Activated naive CD4-positive, alpha-beta T cell treated with anti-CD3 and anti-CD28 coated beads, Interleukin-2, amount 10 ng/mL, durations not matched to agents 7 days and 5 days (primary cell): ENCODE measurements at regions of chr10 and their contacts with region 1.

Region 1: GRCh38 chr10:100433253-100434240 is 29.3 kb upstream of the WNT8B start:
- DNase-seq: peak; percentile 98
- H3K4me3 Mint-ChIP-seq: no peak overlapping the region
- H3K27ac Mint-ChIP-seq: no peak overlapping the region
- H3K4me1 Mint-ChIP-seq: peaks cover 9% of the 10 kb centered on the region
- H3K27me3 Mint-ChIP-seq: no peaks in the 10 kb centered on the region

Region 2: DNA sequence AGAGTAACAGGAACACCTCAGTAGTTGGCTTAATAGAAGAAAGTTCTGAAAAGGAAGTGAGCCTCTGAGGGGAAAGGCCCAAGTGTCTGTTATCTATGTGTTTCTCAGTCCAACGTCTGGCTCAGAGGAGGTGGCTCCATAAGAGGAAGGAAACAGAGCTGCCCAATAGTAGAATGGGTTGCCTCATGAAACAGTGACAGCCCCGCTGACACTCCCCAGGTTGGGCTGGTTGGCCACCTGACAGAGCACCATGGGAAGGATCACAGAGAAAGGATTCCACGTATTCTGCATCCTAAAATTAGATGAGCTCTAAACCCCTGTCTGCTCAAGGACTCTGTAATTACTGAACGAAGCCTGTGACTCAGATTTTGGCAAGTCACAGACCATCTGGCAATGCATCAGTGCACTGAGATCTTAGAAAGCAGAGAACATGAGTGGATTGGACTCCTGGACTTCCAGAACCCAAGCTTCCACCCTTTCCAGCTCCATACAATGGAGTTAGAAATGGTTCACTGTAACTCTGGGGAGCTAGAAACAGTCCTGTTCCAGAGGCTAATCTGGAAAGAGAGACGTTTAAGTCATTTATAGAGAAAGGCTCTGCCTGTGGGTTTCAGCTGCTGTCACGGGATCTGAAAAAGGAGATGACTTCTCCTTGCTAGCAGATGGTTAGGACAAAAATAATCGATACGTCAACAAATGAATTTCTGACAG is 106.4 kb before region 1 on chr10:
- CTCF ChIA-PET with region 1: interaction called, 13 read pairs
- DNase-seq: peak; percentile 57
- H3K4me3 Mint-ChIP-seq: no peak overlapping the region
- H3K27ac Mint-ChIP-seq: peak overlapping the region; percentile 7
- H3K4me1 Mint-ChIP-seq: peaks cover 19% of the 10 kb centered on the region
- H3K27me3 Mint-ChIP-seq: peaks cover 30% of the 10 kb centered on the region

Region 3: DNA sequence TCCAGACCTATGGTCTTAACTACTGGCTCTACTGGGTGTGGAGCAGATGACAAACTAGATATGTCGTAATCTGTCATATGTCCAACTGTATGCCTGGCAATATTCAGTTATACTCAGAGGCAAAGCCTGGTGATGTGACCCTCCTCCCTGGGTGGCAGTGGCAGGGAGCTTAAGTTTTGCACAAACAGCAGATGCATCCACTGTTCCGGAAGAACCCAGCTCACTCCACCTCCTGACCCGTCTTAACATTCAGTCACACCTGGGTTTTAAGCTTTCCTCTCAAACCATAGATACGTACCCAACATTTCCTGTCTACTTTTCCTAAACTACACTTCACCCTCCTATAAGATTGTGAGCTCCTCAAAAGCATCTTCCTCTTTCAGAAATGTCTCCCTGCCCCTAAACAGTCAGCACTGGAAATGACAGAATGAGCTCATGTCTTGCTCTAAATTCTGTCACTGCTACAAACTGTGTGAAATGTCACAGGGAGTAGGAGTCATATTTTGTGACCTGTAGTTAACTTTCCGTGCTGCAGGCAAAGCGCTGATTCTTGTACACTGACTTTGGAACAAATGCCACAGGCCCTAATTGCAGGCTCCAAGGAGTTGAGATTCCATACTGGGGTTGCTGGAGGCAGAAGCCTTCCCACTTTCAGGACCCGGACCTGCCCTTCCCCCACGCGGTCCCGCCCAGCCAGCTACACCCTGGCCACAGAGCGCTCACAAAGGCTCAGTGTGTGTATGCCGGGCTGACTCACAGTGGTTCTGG is 62.6 kb before region 1 on chr10:
- CTCF ChIA-PET with region 1: interaction called, 10 read pairs
- DNase-seq: peak; percentile 74
- H3K4me3 Mint-ChIP-seq: peak overlapping the region; percentile 45
- H3K27ac Mint-ChIP-seq: no peak overlapping the region
- H3K4me1 Mint-ChIP-seq: peaks cover 49% of the 10 kb centered on the region
- H3K27me3 Mint-ChIP-seq: no peaks in the 10 kb centered on the region

Region 4: DNA sequence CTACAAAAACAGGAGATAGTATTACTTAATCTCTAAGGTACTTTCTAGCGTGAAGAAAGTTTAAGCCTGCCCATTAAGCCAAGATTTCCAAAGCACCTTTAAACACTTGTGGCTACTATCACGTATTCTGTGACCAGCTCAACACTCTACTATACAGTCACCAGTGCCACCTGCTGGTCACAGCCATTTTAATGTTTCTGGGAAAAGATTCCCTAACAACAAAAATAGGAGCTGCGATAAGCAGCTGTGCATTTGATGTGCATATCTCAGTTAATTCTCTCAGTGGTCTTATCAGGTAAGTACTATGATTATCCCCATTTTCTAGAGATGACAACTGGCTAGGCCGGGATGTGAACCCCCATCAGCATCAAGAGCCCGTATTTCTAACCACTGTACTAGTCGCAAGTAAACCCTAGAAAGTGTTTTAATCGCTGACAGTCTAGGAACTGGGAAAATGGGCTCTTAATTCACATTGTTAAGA is 85.3 kb after region 1 on chr10:
- CTCF ChIA-PET with region 1: interaction called, 104 read pairs
- DNase-seq: peak; percentile 81
- H3K4me3 Mint-ChIP-seq: no peak overlapping the region
- H3K27ac Mint-ChIP-seq: no peak overlapping the region
- H3K4me1 Mint-ChIP-seq: peaks cover 41% of the 10 kb centered on the region
- H3K27me3 Mint-ChIP-seq: no peaks in the 10 kb centered on the region

Region 5: GRCh38 chr10:100670828-100671479 is 237.4 kb after region 1 on chr10:
- CTCF ChIA-PET with region 1: no interaction called
- DNase-seq: peak; percentile 71
- H3K4me3 Mint-ChIP-seq: no peak overlapping the region
- H3K27ac Mint-ChIP-seq: no peak overlapping the region
- H3K4me1 Mint-ChIP-seq: peaks cover 7% of the 10 kb centered on the region
- H3K27me3 Mint-ChIP-seq: peaks cover 73% of the 10 kb centered on the region